Sciatic nerve (tissue), 2 donors: ENCODE measurements at regions of chr15 and their contacts with region 1.

Region 1: GRCh38 chr15:74127260-74127953 is 3.0 kb upstream of the ISLR2 start:
- DNase-seq: peak; percentile 94
- ATAC-seq: peak; percentile 97

Region 2: GRCh38 chr15:73647259-73648014 is 480.0 kb before region 1 on chr15:
- intact Hi-C with region 1: no loop called
- DNase-seq: no peak
- ATAC-seq: no peak

Region 3: DNA sequence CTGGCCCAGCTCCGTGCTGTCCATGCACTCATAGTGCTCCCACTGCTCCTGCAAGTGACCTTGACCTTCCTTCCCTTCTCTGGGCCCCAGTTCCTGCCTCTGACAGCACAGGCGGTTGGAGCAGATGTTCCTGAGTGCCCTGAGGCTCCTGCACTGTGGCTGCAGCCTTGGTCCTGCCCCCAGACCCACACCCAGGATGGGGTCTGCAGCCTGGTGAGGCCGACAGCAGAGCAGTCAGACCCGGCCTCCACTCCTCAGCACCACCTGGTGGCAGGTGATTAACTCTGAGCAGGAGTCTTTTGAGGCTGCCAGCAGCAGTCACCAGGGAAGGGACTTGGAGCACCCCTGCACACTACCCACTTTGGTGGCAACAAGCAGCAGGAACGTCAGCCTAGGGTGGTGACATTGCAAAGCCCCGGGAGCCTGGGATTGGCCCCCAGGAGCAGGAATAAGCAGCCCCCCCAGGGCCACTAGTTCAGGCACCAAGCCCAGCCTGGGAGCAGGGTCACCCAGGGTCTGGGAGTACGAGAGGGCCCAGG is 175.5 kb after region 1 on chr15:
- intact Hi-C with region 1: loop called (anchors 5 kb)
- DNase-seq: peak; percentile 69
- ATAC-seq: peak; percentile 60